SK-N-SH (cell line): ENCODE measurements at regions of chr2 and their contacts with region 1.

Region 1: GRCh38 chr2:45494269-45494977 is 116.6 kb downstream of the SRBD1 start:
- DNase-seq: peak; percentile 56
- H3K4me3 ChIP-seq: peak overlapping the region in 1 of 2 experiments; percentile 7; a peak in 1 of 4 replicates
- H3K27ac ChIP-seq: no peak overlapping the region; a peak in 1 of 4 replicates
- H3K4me1 ChIP-seq: peaks cover 0 to 4% of the 10 kb centered on the region in 2 experiments; a peak in 1 of 4 replicates
- H3K27me3 ChIP-seq: no peaks in the 10 kb centered on the region
- CTCF ChIP-seq: peak; percentile 93
- EP300 ChIP-seq: no peak
- RAD21 ChIP-seq: peak; percentile 97

Region 2: DNA sequence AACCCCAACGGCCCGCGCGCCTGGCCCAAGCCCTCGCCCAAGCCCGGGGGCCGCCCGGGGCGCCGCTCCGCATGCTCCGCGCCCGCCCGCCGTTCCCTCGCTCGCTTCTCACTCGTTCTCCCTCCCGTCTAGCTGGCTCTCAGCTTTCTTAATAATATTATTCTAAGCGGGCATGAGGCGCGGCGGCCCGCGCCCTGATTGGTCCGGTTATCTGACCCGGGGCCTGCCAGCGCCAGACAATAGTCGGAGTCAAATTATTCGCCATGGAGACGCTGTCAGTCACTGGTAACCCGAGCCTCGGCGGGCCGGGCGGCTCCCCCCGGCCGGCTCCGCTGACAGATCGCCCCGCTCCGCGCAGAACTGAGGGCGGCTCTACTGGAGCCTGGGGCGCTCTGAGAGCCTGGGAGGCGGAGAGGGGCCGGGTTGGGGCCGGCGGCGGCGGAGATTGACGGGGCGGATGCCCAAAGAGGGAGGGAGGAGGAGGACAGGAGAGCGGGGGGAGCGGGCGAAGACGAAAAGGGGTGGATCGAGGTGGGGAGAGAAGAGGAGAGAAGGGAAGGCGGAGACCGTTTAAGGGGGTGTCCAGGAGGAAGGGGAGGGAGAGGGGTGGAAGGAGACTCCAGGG is 485.0 kb before region 1 on chr2 and contains the start of gene SIX2:
- CTCF ChIA-PET with region 1: interaction called, 26 read pairs
- POLR2A ChIA-PET with region 1: no interaction called
- DNase-seq: peak; percentile 99
- H3K4me3 ChIP-seq: peak within 1 kb of the TSS; percentile 55 to 62
- H3K27ac ChIP-seq: peak within 1 kb of the TSS; percentile 17 to 72; a peak in 3 of 4 replicates
- H3K4me1 ChIP-seq: peaks cover 0 to 15% of the 10 kb centered on the region in 2 experiments; a peak in 1 of 4 replicates
- H3K27me3 ChIP-seq: no peaks in the 10 kb centered on the region
- CTCF ChIP-seq: no peak
- EP300 ChIP-seq: peak in 1 of 2 experiments; percentile 64; a peak in 1 of 4 replicates
- RAD21 ChIP-seq: no peak
- polyA plus RNA-seq, gene SIX2: 0.45 and 0.76 TPM in 2 replicates

Region 3: GRCh38 chr2:45055162-45055605 is 439.2 kb before region 1 on chr2:
- CTCF ChIA-PET with region 1: interaction called, 21 read pairs
- POLR2A ChIA-PET with region 1: no interaction called
- DNase-seq: peak; percentile 90
- H3K4me3 ChIP-seq: no peak overlapping the region
- H3K27ac ChIP-seq: peak overlapping the region in 1 of 2 experiments; percentile 64; a peak in 2 of 4 replicates
- H3K4me1 ChIP-seq: peaks cover 0 to 31% of the 10 kb centered on the region in 2 experiments; a peak in 2 of 4 replicates
- H3K27me3 ChIP-seq: no peaks in the 10 kb centered on the region
- CTCF ChIP-seq: no peak
- EP300 ChIP-seq: peak in 1 of 2 experiments; percentile 97; a peak in 2 of 4 replicates
- RAD21 ChIP-seq: peak; percentile 60

Region 4: GRCh38 chr2:45403036-45403435 is 91.4 kb before region 1 on chr2:
- CTCF ChIA-PET with region 1: interaction called, 12 read pairs
- POLR2A ChIA-PET with region 1: no interaction called
- DNase-seq: no peak
- H3K4me3 ChIP-seq: no peak overlapping the region
- H3K27ac ChIP-seq: no peak overlapping the region
- H3K4me1 ChIP-seq: peaks cover 0 to 23% of the 10 kb centered on the region in 2 experiments; a peak in 2 of 4 replicates
- H3K27me3 ChIP-seq: no peaks in the 10 kb centered on the region
- CTCF ChIP-seq: no peak
- EP300 ChIP-seq: no peak
- RAD21 ChIP-seq: no peak

Region 5: DNA sequence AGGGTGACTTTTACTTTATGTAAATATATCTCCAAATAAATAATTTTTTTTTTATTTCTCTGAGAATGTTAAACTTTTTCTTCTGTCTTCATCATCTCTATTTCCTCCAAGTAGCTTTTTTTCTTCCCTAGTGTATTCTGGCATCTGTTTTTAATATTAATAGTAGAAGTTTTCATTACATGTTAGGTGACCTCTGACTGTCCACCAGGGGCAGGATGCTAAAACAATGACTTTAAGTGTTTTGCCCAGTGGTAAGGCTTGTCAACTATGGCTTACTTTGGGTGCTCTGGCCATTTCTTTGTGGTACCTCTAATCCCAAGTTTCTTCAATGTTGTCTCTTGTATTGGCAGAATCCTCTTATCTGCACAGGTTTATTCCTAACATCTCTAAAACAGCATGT is 10.4 kb before region 1 on chr2:
- CTCF ChIA-PET with region 1: interaction called, 27 read pairs
- POLR2A ChIA-PET with region 1: no interaction called
- DNase-seq: peak; percentile 30
- H3K4me3 ChIP-seq: no peak overlapping the region
- H3K27ac ChIP-seq: no peak overlapping the region
- H3K4me1 ChIP-seq: peaks cover 0 to 2% of the 10 kb centered on the region in 2 experiments; a peak in 1 of 4 replicates
- H3K27me3 ChIP-seq: no peaks in the 10 kb centered on the region
- CTCF ChIP-seq: peak; percentile 67
- EP300 ChIP-seq: no peak
- RAD21 ChIP-seq: no peak

Region 6: GRCh38 chr2:45510701-45511420 is 16.4 kb after region 1 on chr2:
- CTCF ChIA-PET with region 1: interaction called, 50 read pairs
- POLR2A ChIA-PET with region 1: no interaction called
- DNase-seq: no peak
- H3K4me3 ChIP-seq: no peak overlapping the region
- H3K27ac ChIP-seq: no peak overlapping the region
- H3K4me1 ChIP-seq: no peaks in the 10 kb centered on the region; a peak in 2 of 4 replicates
- H3K27me3 ChIP-seq: no peaks in the 10 kb centered on the region
- CTCF ChIP-seq: no peak
- EP300 ChIP-seq: no peak
- RAD21 ChIP-seq: no peak

Region 7: DNA sequence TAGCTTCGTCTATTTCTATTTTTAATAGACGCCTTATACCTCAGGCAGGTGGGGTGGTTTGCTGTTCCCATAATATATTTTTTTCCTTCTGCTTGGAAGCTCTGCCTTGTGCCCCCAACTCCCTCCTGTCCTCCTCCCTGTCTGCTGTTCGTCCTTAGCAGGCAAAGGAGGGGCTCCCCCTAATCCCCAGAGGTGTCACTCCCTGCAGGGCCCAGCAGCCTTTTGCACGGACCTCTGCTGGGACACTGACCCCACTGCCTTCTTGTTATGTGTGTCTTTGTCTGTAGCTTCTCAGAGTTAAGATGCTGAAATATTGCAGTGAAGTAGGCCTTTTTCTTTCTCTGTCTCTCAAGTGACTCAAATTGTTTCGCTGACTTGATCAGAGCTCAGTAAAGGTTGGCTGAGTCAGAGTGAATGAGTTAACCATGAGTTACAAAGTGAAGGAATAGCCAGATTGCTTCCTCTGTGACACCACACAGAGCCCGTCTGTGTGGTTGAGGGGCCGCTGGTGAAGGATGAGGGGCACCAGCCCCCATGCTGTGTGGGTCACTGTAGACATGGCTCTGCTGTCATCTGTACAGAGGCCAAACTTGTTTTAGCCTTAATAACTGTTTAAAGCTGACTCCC is 204.7 kb after region 1 on chr2:
- CTCF ChIA-PET with region 1: no interaction called
- POLR2A ChIA-PET with region 1: no interaction called
- DNase-seq: no peak
- H3K4me3 ChIP-seq: no peak overlapping the region
- H3K27ac ChIP-seq: peak overlapping the region; percentile 66 to 69; a peak in 3 of 4 replicates
- H3K4me1 ChIP-seq: peaks cover 17 to 35% of the 10 kb centered on the region in 2 experiments
- H3K27me3 ChIP-seq: no peaks in the 10 kb centered on the region
- CTCF ChIP-seq: no peak
- EP300 ChIP-seq: peak in 1 of 2 experiments; percentile 49; a peak in 2 of 4 replicates
- RAD21 ChIP-seq: no peak

Region 8: GRCh38 chr2:45780541-45781463 is 286.4 kb after region 1 on chr2:
- CTCF ChIA-PET with region 1: no interaction called
- POLR2A ChIA-PET with region 1: no interaction called
- DNase-seq: no peak
- H3K4me3 ChIP-seq: no peak overlapping the region
- H3K27ac ChIP-seq: no peak overlapping the region
- H3K4me1 ChIP-seq: peaks cover 0 to 30% of the 10 kb centered on the region in 2 experiments; a peak in 1 of 4 replicates
- H3K27me3 ChIP-seq: no peaks in the 10 kb centered on the region
- CTCF ChIP-seq: no peak
- EP300 ChIP-seq: no peak
- RAD21 ChIP-seq: no peak